Cardiac septum (tissue), 1 donor: ENCODE measurements at regions of chr15 and their contacts with region 1.

Region 1: DNA sequence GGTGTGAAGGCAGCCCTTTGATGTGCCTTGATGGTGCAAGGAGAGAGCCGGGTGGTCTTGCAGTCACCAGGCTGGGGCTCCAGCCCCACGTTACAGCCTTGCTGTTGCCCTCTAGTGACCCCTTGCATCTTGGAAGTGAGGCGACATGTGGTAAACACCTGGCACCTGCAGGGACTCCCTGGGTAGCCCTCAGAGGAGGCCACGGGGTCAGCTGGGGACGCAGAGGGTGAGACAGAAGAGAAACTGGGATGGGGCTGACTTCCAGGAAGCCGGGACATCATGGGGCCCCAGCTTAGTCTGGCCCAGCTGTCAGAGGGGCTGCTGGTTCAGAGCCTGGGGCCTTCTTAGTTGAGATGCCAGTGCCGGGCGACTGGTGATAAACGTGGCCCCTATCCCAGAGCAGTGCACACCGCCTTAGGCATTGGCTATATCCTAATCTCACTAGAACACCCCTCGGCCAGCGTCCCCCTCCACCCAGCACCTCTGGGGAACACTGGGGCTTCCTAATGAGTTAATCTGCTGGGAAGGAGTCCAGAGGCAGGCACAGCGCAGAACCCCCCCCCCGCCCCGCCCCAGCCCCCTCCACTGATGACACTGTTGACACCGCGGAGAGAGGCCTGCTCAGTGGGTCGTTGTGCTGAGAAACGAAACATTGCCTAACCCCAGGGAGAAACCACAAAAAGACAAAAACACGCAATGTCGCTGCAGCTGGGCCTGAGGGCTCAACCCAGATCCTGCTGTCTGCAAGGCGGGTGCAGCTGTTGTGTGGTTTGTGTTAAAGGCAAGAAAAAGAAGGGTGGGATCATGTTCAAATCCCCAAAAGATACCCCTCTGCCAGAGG is 60.5 kb upstream of the KLF13 start:
- DNase-seq: peak; percentile 90

Region 2: GRCh38 chr15:31296646-31297574 is 30.8 kb after region 1 on chr15:
- intact Hi-C with region 1: loop called (anchors 5 kb)
- DNase-seq: no peak

Region 3: GRCh38 chr15:31317421-31318327 is 51.6 kb after region 1 on chr15:
- intact Hi-C with region 1: loop called (anchors 5 kb)
- DNase-seq: no peak